Activated naive CD4-positive, alpha-beta T cell treated with anti-CD3 and anti-CD28 coated beads for 36 hours (primary cell): ENCODE measurements at regions of chr10 and their contacts with region 1.

Region 1: GRCh38 chr10:72048450-72049124 is 39.8 kb downstream of the SPOCK2 start:
- DNase-seq: peak; percentile 98
- H3K4me3 Mint-ChIP-seq: no peak overlapping the region
- H3K27ac Mint-ChIP-seq: no peak overlapping the region
- H3K4me1 Mint-ChIP-seq: peaks cover 3% of the 10 kb centered on the region
- H3K27me3 Mint-ChIP-seq: no peaks in the 10 kb centered on the region

Region 2: GRCh38 chr10:71319042-71319799 is 729.4 kb before region 1 on chr10 and contains the start of gene SLC29A3:
- CTCF ChIA-PET with region 1: no interaction called
- intact Hi-C with region 1: loop called (anchors 5 kb)
- DNase-seq: peak; percentile 92
- H3K4me3 Mint-ChIP-seq: peak within 1 kb of the TSS; percentile 93
- H3K27ac Mint-ChIP-seq: peak within 1 kb of the TSS; percentile 18
- H3K4me1 Mint-ChIP-seq: peaks cover 35% of the 10 kb centered on the region
- H3K27me3 Mint-ChIP-seq: no peaks in the 10 kb centered on the region
- total RNA-seq, gene SLC29A3: 1.2 to 1.5 TPM

Region 3: DNA sequence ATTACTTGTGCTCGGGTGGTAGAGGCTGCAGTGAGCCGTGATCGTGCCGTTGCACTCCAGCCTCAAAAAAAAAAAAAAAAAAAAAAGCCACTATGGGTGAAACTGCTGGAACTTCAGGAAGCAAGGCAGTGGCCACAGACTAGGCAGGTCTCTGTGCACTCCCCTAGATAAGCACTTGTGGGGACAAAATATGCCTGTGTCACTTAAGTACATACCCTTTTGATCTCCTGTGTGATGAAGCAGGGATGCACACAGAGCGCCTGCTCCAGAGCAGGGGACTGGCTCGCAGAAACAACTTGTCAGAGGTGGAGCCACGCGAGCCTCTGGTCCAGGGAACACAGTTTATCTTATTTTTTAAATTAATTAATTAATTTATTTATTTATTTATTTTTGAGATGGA is 154.7 kb before region 1 on chr10:
- CTCF ChIA-PET with region 1: interaction called, 149 read pairs
- intact Hi-C with region 1: loop called (anchors 1 kb)
- DNase-seq: no peak
- H3K4me3 Mint-ChIP-seq: no peak overlapping the region
- H3K27ac Mint-ChIP-seq: no peak overlapping the region
- H3K4me1 Mint-ChIP-seq: peaks cover 18% of the 10 kb centered on the region
- H3K27me3 Mint-ChIP-seq: no peaks in the 10 kb centered on the region

Region 4: GRCh38 chr10:71985542-71986250 is 62.9 kb before region 1 on chr10:
- CTCF ChIA-PET with region 1: interaction called, 18 read pairs
- intact Hi-C with region 1: loop called (anchors 2 kb)
- DNase-seq: peak; percentile 33
- H3K4me3 Mint-ChIP-seq: peak overlapping the region; percentile 3
- H3K27ac Mint-ChIP-seq: peak overlapping the region; percentile 73
- H3K4me1 Mint-ChIP-seq: peaks cover 22% of the 10 kb centered on the region
- H3K27me3 Mint-ChIP-seq: no peaks in the 10 kb centered on the region

Region 5: GRCh38 chr10:72024596-72024995 is 24.0 kb before region 1 on chr10:
- CTCF ChIA-PET with region 1: no interaction called
- intact Hi-C with region 1: no loop called
- DNase-seq: no peak
- H3K4me3 Mint-ChIP-seq: no peak overlapping the region
- H3K27ac Mint-ChIP-seq: no peak overlapping the region
- H3K4me1 Mint-ChIP-seq: peaks cover 8% of the 10 kb centered on the region
- H3K27me3 Mint-ChIP-seq: no peaks in the 10 kb centered on the region

Region 6: GRCh38 chr10:72075333-72076115 is 26.9 kb after region 1 on chr10:
- CTCF ChIA-PET with region 1: interaction called, 12 read pairs
- intact Hi-C with region 1: no loop called
- DNase-seq: peak; percentile 48
- H3K4me3 Mint-ChIP-seq: no peak overlapping the region
- H3K27ac Mint-ChIP-seq: peak overlapping the region; percentile 87
- H3K4me1 Mint-ChIP-seq: peaks cover 71% of the 10 kb centered on the region
- H3K27me3 Mint-ChIP-seq: no peaks in the 10 kb centered on the region

Region 7: DNA sequence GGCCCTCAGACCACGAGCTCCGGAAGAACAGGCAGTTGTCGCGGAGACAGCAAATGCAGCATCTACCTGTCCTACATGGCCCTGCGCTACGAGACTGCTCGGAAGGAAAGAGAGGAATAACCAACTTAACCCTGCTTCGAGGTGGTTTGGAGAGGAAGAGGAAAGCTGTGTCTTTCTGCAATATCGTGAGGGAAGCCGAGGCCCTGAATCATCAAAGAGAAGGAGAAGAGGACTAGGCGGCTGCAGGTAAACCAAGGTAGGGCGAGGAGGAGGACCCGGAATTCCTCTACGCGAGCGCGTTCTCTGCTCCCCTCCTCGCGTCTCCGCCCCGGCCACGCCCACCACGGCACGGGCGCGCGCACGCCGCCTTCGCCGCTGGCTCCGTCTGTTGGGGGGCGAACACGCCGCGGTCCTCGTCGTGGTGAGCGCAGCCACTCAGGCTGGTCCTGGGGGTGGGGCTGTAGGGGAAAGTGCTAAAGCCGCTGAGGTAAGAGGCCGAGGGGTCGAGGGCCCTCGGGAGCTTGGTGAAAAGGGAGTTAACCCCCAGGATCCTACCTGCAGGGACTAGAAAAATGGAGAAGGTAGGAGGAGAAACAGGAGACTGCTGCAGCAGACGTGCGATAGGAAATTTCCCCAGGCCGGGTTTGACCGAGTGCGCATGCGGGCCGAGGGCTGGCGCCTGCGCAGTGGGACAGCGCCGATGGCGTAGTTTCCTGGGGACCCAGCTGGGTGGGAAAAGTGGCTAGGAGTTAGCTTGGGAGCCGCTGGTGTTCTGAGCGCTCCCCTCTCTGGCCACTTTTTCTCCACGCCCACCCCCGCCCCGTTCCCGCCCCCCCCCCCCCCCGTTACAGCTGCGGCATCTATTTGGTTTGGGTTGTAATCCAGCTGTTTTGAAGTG is 167.3 kb after region 1 on chr10 and contains the starts of genes ANAPC16 and ASCC1:
- CTCF ChIA-PET with region 1: interaction called, 30 read pairs
- intact Hi-C with region 1: no loop called
- DNase-seq: peak; percentile 93
- H3K4me3 Mint-ChIP-seq: peak within 1 kb of the TSS; percentile 91
- H3K27ac Mint-ChIP-seq: peak within 1 kb of the TSS; percentile 98
- H3K4me1 Mint-ChIP-seq: peaks cover 67% of the 10 kb centered on the region
- H3K27me3 Mint-ChIP-seq: no peaks in the 10 kb centered on the region
- total RNA-seq, gene ANAPC16: 127 to 128 TPM
- total RNA-seq, gene ASCC1: 61.6 to 68.5 TPM

Region 8: DNA sequence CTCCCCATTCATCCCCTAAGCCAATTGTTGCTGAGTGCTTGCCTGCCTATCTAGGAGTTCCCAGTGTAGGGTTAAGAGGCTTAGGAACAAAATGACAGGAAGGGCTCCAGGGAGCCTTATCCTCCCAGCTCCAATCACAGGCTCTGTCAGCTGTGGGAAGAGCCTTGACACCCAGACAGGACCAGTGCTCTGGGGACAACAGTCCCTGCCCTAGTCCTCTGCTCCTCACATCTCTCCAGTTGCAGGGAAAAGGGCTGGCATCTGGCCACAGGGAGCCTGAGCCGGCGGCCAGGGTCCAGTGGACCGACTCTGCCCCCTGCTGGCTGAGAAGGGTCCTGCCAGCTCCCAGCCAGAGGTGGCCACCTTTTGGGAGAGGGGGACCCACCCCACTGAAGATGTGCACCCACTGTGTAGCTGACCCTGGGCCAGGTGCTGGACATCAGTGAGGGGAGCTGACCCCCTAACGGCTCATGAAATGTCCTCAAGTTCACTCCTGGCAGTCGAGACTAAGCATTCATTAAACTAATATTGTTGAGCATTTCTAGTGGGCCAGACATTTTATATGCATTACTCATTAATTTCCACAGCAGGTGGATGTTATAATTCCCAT is 288.5 kb after region 1 on chr10:
- CTCF ChIA-PET with region 1: interaction called, 83 read pairs
- intact Hi-C with region 1: loop called (anchors 1 kb)
- DNase-seq: peak; percentile 79
- H3K4me3 Mint-ChIP-seq: no peak overlapping the region
- H3K27ac Mint-ChIP-seq: peak overlapping the region; percentile 100
- H3K4me1 Mint-ChIP-seq: peaks cover 52% of the 10 kb centered on the region
- H3K27me3 Mint-ChIP-seq: no peaks in the 10 kb centered on the region